ENCODE measurements at regions of chr16 and their contacts with region 1.

Region 1: GRCh38 chr16:27189335-27189972 is 13.9 kb upstream of the KDM8 start:
- DNase-seq: no peak
- H3K4me3 ChIP-seq: no peak overlapping the region
- H3K27ac ChIP-seq: no peak overlapping the region
- H3K4me1 ChIP-seq: no peaks in the 10 kb centered on the region
- H3K27me3 ChIP-seq: no peaks in the 10 kb centered on the region
- CTCF ChIP-seq: no peak

Region 2: GRCh38 chr16:27127308-27127707 is 62.1 kb before region 1 on chr16:
- CTCF ChIA-PET with region 1: no interaction called
- dilution Hi-C with region 1: loop called (anchors 5 kb)
- in situ Hi-C with region 1: no loop called
- intact Hi-C with region 1: no loop called
- DNase-seq: peak; percentile 30
- H3K4me3 ChIP-seq: no peak overlapping the region
- H3K27ac ChIP-seq: no peak overlapping the region
- H3K4me1 ChIP-seq: no peaks in the 10 kb centered on the region
- H3K27me3 ChIP-seq: no peaks in the 10 kb centered on the region
- CTCF ChIP-seq: no peak

Region 3: DNA sequence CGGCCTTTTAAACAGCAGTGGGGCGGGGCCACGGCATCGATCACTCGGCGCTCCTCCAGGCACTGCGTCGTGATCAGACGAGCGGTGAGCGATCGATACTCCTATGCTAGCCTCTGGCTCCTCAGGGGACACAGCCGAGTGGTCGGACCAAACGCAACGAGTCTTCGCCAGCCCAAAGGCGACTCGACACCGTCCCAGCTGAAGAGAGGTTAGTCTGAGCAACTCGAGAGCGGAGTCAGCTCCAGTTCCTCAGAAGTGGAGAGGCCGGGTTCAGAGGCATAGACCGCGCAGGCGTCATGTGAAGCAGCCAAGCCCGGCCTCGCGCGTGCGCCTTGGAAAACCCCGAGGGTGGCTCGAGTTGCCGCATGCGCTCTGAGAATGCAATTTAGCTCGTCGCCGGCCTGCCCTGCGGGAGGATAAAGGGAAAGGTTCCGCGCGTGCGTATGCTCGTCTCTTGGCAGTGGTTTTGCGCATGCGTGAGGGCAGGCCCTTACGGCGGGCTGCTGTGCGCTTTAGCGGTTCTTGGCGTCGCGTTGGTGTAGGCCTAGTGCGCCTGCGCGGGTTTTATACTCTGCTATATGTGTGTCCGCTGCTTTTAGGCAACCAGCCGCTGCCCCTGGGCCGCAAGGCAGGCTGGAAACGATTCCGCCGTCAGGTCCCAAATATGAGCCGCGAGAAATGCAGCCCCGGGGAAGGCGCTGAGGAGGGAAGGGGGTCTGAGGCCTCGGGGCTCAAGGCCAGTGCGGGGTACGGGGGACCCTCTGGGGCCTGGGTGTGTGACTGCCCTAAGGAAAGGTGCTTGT is 14.2 kb after region 1 on chr16 and contains the start of gene KDM8:
- CTCF ChIA-PET with region 1: no interaction called
- dilution Hi-C with region 1: no loop called
- in situ Hi-C with region 1: no loop called
- intact Hi-C with region 1: no loop called
- DNase-seq: peak; percentile 99
- H3K4me3 ChIP-seq: peak within 1 kb of the TSS; percentile 60 to 89 (median 87)
- H3K27ac ChIP-seq: peak within 1 kb of the TSS; percentile 88
- H3K4me1 ChIP-seq: peaks cover 16% of the 10 kb centered on the region
- H3K27me3 ChIP-seq: no peaks in the 10 kb centered on the region
- CTCF ChIP-seq: no peak
- total RNA-seq, gene KDM8: 2.8 to 4.0 TPM

Region 4: GRCh38 chr16:27264151-27264550 is 74.7 kb after region 1 on chr16:
- CTCF ChIA-PET with region 1: no interaction called
- dilution Hi-C with region 1: no loop called
- in situ Hi-C with region 1: no loop called
- intact Hi-C with region 1: no loop called
- DNase-seq: peak; percentile 92
- H3K4me3 ChIP-seq: peak overlapping the region in 1 of 3 experiments; percentile 18
- H3K27ac ChIP-seq: peak overlapping the region; percentile 47
- H3K4me1 ChIP-seq: peaks cover 13% of the 10 kb centered on the region
- H3K27me3 ChIP-seq: no peaks in the 10 kb centered on the region
- CTCF ChIP-seq: no peak